ENCODE measurements at regions of chr7 and their contacts with region 1.

Region 1: GRCh38 chr7:138008547-138009349 is 6.9 kb upstream of the CREB3L2 start:
- DNase-seq: peak; percentile 70
- ATAC-seq: peak; percentile 64
- H3K4me3 ChIP-seq: no peak overlapping the region
- H3K4me3 Mint-ChIP-seq: no peak overlapping the region
- H3K27ac ChIP-seq: no peak overlapping the region
- H3K27ac Mint-ChIP-seq: no peak overlapping the region
- H3K4me1 ChIP-seq: peaks cover 5 to 6% of the 10 kb centered on the region in 2 donors
- H3K4me1 Mint-ChIP-seq: peaks cover 4% of the 10 kb centered on the region
- H3K27me3 ChIP-seq: no peaks in the 10 kb centered on the region
- H3K27me3 Mint-ChIP-seq: peaks cover 3% of the 10 kb centered on the region
- CTCF ChIP-seq: peak; percentile 86

Region 2: DNA sequence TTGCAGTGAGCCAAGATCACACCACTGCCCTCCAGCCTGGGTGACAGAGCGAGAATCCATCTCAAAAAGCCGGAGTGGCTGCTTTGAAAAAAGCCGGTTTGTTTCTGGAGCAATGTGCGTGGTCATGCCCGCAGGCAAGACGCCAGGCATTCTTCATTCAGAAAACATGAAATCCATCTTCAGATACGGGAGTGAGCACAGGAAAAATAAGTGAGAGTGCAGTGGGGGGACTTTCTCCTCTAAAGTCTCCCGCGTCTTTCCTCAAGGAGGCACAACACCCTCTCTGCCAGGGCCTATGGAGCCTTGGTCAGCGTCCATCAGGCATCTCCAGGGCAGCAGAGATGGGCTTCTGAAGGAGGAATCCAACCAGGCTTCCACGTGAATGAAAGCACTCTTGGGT is 99.7 kb before region 1 on chr7:
- CTCF ChIA-PET with region 1: interaction called, 385 read pairs
- POLR2A ChIA-PET with region 1: no interaction called
- intact Hi-C with region 1: no loop called
- DNase-seq: no peak
- ATAC-seq: no peak
- H3K4me3 ChIP-seq: no peak overlapping the region
- H3K4me3 Mint-ChIP-seq: no peak overlapping the region
- H3K27ac ChIP-seq: no peak overlapping the region
- H3K27ac Mint-ChIP-seq: no peak overlapping the region
- H3K4me1 ChIP-seq: no peaks in the 10 kb centered on the region
- H3K4me1 Mint-ChIP-seq: no peaks in the 10 kb centered on the region
- H3K27me3 ChIP-seq: no peaks in the 10 kb centered on the region
- H3K27me3 Mint-ChIP-seq: no peaks in the 10 kb centered on the region
- CTCF ChIP-seq: no peak

Region 3: GRCh38 chr7:137985253-137985896 is 23.4 kb before region 1 on chr7:
- CTCF ChIA-PET with region 1: interaction called, 44 read pairs
- POLR2A ChIA-PET with region 1: no interaction called
- intact Hi-C with region 1: loop called (anchors 2 kb)
- DNase-seq: peak; percentile 71
- ATAC-seq: peak; percentile 73
- H3K4me3 ChIP-seq: peak overlapping the region in 1 of 5 experiments; percentile 31
- H3K4me3 Mint-ChIP-seq: peak overlapping the region; percentile 58
- H3K27ac ChIP-seq: peak overlapping the region; percentile 89 to 94
- H3K27ac Mint-ChIP-seq: no peak overlapping the region
- H3K4me1 ChIP-seq: peaks cover 75 to 84% of the 10 kb centered on the region in 2 donors
- H3K4me1 Mint-ChIP-seq: peaks cover 30% of the 10 kb centered on the region
- H3K27me3 ChIP-seq: no peaks in the 10 kb centered on the region
- H3K27me3 Mint-ChIP-seq: no peaks in the 10 kb centered on the region
- CTCF ChIP-seq: no peak

Region 4: GRCh38 chr7:137992550-137993394 is 16.0 kb before region 1 on chr7:
- CTCF ChIA-PET with region 1: interaction called, 44 read pairs
- POLR2A ChIA-PET with region 1: no interaction called
- intact Hi-C with region 1: no loop called
- DNase-seq: no peak
- ATAC-seq: no peak
- H3K4me3 ChIP-seq: no peak overlapping the region
- H3K4me3 Mint-ChIP-seq: no peak overlapping the region
- H3K27ac ChIP-seq: peak overlapping the region in 1 of 2 donors; percentile 37
- H3K27ac Mint-ChIP-seq: peak overlapping the region; percentile 56
- H3K4me1 ChIP-seq: peaks cover 31 to 34% of the 10 kb centered on the region in 2 donors
- H3K4me1 Mint-ChIP-seq: peaks cover 31% of the 10 kb centered on the region
- H3K27me3 ChIP-seq: no peaks in the 10 kb centered on the region
- H3K27me3 Mint-ChIP-seq: no peaks in the 10 kb centered on the region
- CTCF ChIP-seq: no peak

Region 5: GRCh38 chr7:138023618-138024342 is 15.0 kb after region 1 on chr7:
- CTCF ChIA-PET with region 1: interaction called, 57 read pairs
- POLR2A ChIA-PET with region 1: interaction called, 5 read pairs
- intact Hi-C with region 1: no loop called
- DNase-seq: peak; percentile 45
- ATAC-seq: peak; percentile 39
- H3K4me3 ChIP-seq: peak overlapping the region in 2 of 5 experiments; percentile 4 to 48
- H3K4me3 Mint-ChIP-seq: peak overlapping the region; percentile 70
- H3K27ac ChIP-seq: peak overlapping the region; percentile 36 to 82
- H3K27ac Mint-ChIP-seq: peak overlapping the region; percentile 53
- H3K4me1 ChIP-seq: peaks cover 46 to 57% of the 10 kb centered on the region in 2 donors
- H3K4me1 Mint-ChIP-seq: peaks cover 51% of the 10 kb centered on the region
- H3K27me3 ChIP-seq: no peaks in the 10 kb centered on the region
- H3K27me3 Mint-ChIP-seq: no peaks in the 10 kb centered on the region
- CTCF ChIP-seq: no peak

Region 6: DNA sequence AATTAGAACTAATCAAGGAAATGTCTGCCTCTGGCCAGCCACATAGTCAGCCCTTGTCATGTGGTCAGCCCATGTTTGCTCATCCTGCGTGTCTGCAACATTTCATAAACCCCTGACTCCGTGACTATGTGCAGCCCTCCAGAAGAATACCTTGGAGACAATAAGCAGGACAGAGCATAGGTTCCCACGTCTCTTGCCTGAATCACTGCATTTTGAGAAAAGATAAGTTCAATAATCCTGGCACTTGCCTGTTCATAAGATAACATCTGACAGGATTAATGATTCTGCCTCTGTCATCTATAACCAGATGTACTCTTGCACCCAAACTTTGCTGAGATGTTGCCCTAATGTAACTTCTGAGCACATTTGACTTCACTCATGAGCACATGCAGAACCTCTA is 145.9 kb after region 1 on chr7:
- CTCF ChIA-PET with region 1: no interaction called
- POLR2A ChIA-PET with region 1: no interaction called
- intact Hi-C with region 1: no loop called
- DNase-seq: no peak
- ATAC-seq: no peak
- H3K4me3 ChIP-seq: no peak overlapping the region
- H3K4me3 Mint-ChIP-seq: no peak overlapping the region
- H3K27ac ChIP-seq: no peak overlapping the region
- H3K27ac Mint-ChIP-seq: no peak overlapping the region
- H3K4me1 ChIP-seq: no peaks in the 10 kb centered on the region
- H3K4me1 Mint-ChIP-seq: no peaks in the 10 kb centered on the region
- H3K27me3 ChIP-seq: peaks cover 0 to 4% (median 0%) of the 10 kb centered on the region in 4 experiments
- H3K27me3 Mint-ChIP-seq: no peaks in the 10 kb centered on the region
- CTCF ChIP-seq: no peak